Calu3 (cell line): ENCODE measurements at regions of chr3 and their contacts with region 1.

Region 1: DNA sequence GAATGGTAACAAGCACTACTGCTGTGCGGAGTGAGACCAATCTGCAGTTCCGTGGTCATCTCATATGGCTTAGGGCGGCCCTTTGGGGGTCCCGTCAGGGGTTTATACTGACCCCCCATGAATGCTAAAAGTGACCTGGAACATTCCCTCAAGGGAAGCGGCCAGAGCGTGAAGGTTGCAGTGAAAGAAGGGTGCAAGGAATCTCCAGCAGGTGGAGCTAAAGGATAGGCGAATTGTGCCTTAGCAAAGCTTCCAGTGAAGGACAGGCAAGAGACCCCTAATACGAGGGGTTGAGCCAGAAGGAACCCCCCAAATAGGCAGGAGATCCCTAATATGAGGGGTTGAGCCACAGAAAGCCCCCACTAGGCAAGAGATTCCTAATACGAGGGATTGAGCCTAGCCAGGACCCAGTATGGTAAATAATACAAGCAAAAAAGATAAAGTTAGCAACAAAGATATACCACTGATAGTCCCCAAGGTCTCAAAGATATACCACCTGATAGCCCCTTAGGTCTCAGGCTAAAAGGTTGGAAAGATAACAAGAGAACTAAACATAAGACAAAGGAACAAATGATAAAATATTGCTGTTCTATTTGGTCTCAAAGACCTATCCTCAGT is 32.8 kb downstream of the ZNF589 start:
- DNase-seq: peak; percentile 69
- H3K4me3 Mint-ChIP-seq: no peak overlapping the region
- H3K27ac Mint-ChIP-seq: no peak overlapping the region
- H3K4me1 Mint-ChIP-seq: peaks cover 33% of the 10 kb centered on the region
- H3K27me3 Mint-ChIP-seq: no peaks in the 10 kb centered on the region
- CTCF ChIP-seq: peak; percentile 64

Region 2: DNA sequence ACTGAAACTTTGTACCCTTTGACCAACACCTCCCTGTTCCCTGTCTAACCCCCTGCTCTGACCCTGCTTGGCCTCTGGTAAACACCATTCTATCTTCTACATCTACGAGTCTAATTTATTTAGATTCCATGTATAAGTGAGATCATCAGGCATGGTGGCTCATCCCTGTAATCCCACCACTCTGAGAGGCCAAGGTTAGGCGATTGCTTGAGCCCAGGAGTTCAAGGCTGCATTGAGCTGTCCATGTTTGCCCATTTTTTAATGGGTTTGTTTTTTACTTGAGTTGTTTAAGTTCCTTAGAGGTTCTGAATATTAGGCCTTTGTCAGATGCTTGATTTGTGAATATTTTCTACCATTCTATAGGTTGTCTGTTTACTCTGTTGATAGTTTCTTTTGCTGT is 115.3 kb after region 1 on chr3:
- CTCF ChIA-PET with region 1: no interaction called
- intact Hi-C with region 1: loop called (anchors 10 kb)
- DNase-seq: no peak
- H3K4me3 Mint-ChIP-seq: no peak overlapping the region
- H3K27ac Mint-ChIP-seq: no peak overlapping the region
- H3K4me1 Mint-ChIP-seq: no peaks in the 10 kb centered on the region
- H3K27me3 Mint-ChIP-seq: peaks cover 25% of the 10 kb centered on the region
- CTCF ChIP-seq: no peak

Region 3: GRCh38 chr3:48400824-48401433 is 127.2 kb after region 1 on chr3:
- CTCF ChIA-PET with region 1: interaction called, 11 read pairs
- intact Hi-C with region 1: no loop called
- DNase-seq: peak; percentile 60
- H3K4me3 Mint-ChIP-seq: no peak overlapping the region
- H3K27ac Mint-ChIP-seq: peak overlapping the region; percentile 36
- H3K4me1 Mint-ChIP-seq: peaks cover 13% of the 10 kb centered on the region
- H3K27me3 Mint-ChIP-seq: peaks cover 5% of the 10 kb centered on the region
- CTCF ChIP-seq: peak; percentile 66

Region 4: GRCh38 chr3:48429317-48429959 is 155.7 kb after region 1 on chr3:
- CTCF ChIA-PET with region 1: interaction called, 10 read pairs
- intact Hi-C with region 1: no loop called
- DNase-seq: peak; percentile 91
- H3K4me3 Mint-ChIP-seq: peak overlapping the region; percentile 80
- H3K27ac Mint-ChIP-seq: peak overlapping the region; percentile 89
- H3K4me1 Mint-ChIP-seq: peaks cover 62% of the 10 kb centered on the region
- H3K27me3 Mint-ChIP-seq: no peaks in the 10 kb centered on the region
- CTCF ChIP-seq: no peak

Region 5: DNA sequence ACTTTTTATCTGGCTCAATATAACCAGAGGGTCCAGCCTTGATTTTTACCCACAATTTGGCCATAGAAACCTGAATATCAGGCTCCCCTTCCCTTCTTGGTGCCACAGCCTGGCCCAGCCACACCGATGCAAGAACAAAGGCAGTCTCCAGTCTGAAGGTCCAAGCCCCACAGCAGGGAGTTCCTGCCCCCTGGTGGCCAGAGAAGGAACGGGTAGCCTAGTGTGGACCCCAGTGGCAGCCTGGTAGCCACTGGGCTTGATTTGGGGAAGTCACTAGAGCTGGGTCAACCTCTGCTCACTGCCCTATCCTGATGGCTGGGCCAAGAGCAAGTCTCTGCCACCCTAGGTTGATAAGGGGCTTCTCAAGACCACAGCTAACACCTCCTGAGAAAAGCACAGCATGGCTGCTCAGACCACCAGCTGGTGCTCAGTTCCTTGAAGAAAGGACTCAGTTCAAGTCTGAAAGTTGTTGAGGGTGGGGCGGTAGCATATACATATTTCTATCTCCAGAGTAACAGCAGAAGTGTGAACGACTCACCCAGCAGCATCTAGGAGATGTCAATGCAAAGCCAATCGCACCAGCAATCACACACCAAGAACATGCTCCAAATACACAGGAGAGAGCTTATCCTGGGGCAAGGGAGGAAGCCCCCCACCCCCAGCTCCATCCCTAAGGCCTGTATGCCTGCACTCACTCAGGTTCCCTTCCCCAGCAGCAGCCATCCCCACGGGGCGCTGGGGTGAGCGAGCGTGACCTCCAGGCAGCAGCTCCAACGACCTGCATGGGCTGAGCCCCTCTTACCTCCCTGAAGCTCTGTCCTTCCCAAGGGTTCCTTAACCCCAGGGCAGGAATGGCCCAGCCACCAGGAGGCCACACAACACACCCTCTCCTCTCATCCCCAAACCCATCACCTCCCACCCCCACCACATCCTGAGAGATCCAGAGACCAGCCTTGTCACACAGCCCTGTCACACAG is 275.3 kb after region 1 on chr3:
- CTCF ChIA-PET with region 1: interaction called, 3 read pairs
- intact Hi-C with region 1: loop called (anchors 2 kb)
- DNase-seq: peak; percentile 88
- H3K4me3 Mint-ChIP-seq: no peak overlapping the region
- H3K27ac Mint-ChIP-seq: no peak overlapping the region
- H3K4me1 Mint-ChIP-seq: no peaks in the 10 kb centered on the region
- H3K27me3 Mint-ChIP-seq: no peaks in the 10 kb centered on the region
- CTCF ChIP-seq: peak; percentile 89